Dendritic cell treated with granulocyte-macrophage colony-stimulating factor and Interleukin-4, amounts not matched to agents 40 ng/mL and 50 ng/mL, for 4 days (primary cell): ENCODE measurements at regions of chr6 and their contacts with region 1.

Region 1: DNA sequence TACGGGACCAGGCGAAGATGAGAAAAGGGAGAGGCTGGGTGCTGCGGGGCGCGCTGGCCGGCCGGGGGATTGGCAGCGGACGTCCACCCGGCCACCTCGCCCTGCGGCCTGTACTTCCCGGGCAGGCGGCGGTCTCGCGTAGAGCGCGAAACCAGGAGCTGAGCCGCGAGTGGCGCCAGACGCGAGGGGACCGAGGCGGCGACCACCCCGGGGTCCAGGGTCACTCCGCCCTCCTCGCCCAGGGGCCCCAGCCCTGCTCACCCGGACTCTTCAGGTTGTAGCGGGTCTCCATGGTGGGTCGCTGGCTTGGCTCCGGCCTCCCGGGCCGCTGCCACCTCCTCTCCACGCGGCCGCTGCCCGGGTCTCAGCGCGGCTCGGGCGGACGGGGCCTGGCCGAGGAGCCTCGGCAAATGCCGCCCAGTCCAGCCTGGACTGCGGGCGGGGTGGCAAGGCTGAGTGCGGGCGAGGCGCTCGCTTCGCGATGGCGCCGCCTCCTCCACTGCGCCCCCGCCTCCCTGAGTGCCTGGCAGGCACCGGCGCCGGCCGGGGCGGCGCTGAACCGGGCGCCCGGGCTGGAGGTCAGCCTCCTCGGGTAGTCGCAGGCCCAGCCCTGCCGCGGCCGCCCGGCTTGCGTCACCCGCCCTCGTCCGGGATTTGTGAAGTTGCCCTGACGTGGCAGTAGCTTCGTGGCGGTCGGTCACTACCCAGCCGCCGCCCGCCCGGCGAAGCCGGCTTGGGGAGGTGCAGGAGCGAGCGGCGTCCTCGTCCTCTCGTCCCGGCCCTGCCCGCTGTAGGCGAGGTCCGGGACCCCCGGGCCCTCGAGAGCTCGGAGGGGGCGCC is at the start of gene UBE2J1:
- H3K4me3 Mint-ChIP-seq: peak within 1 kb of the TSS; percentile 88
- H3K27ac Mint-ChIP-seq: peak within 1 kb of the TSS; percentile 94
- H3K4me1 Mint-ChIP-seq: peaks cover 45% of the 10 kb centered on the region
- H3K27me3 Mint-ChIP-seq: no peaks in the 10 kb centered on the region

Region 2: DNA sequence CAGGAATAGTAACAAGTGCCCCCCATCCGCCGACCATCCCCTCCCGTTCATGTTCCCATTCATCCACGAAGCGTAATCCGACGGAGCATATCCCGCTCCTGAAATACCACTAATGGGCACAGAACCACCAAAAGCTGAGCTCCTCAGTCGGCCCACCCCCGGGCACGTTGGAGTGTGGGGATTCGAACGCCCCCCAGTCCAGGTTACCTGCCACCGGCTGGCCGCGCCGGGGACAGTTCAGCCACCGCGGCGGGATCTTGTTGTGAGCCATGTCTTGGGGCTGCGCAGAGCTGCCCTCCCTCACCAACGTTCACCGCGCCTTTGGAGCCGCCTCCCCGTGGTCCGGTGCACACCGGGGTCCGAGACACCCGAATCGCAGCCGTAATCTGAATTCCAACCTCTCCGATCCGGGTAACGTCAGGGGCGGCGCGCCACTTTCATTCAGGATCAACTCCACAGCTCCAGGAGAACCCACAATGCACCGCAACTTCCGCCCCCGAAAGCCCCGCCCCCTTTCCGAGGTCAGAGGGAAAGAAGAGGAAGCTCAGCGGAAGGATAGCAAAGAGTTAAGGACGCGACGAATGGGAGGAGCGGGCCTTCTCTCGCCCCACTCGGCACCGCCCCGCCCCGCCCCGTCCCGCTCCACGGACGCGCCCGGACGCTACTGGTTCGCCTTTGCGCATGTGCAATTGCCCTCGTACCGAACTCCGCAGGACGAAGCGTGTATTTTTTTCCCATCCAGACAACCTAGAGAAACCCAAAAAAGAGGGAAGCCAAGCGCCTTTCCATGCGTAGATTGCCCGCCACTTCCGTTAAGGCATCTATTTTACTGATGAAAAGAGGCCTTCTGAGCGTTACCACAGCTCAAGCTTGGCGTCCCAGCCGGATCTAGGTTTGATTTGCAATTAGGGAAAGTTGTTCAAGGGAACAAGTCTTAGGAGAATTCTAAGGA is 389.1 kb before region 1 on chr6 and contains the start of gene RNGTT:
- intact Hi-C with region 1: loop called (anchors 1 kb)
- H3K4me3 Mint-ChIP-seq: peak within 1 kb of the TSS; percentile 96
- H3K27ac Mint-ChIP-seq: peak within 1 kb of the TSS; percentile 97
- H3K4me1 Mint-ChIP-seq: peaks cover 24% of the 10 kb centered on the region
- H3K27me3 Mint-ChIP-seq: peaks cover 4% of the 10 kb centered on the region

Region 3: GRCh38 chr6:89432875-89433251 is 80.4 kb after region 1 on chr6 and contains the start of gene ANKRD6:
- intact Hi-C with region 1: no loop called
- H3K4me3 Mint-ChIP-seq: peak within 1 kb of the TSS; percentile 77
- H3K27ac Mint-ChIP-seq: peak within 1 kb of the TSS; percentile 41
- H3K4me1 Mint-ChIP-seq: peaks cover 11% of the 10 kb centered on the region
- H3K27me3 Mint-ChIP-seq: peaks cover 9% of the 10 kb centered on the region

Region 4: GRCh38 chr6:89749918-89750317 is 397.4 kb after region 1 on chr6:
- intact Hi-C with region 1: no loop called
- H3K4me3 Mint-ChIP-seq: no peak overlapping the region
- H3K27ac Mint-ChIP-seq: no peak overlapping the region
- H3K4me1 Mint-ChIP-seq: no peaks in the 10 kb centered on the region
- H3K27me3 Mint-ChIP-seq: no peaks in the 10 kb centered on the region